Panc1 (cell line): ENCODE measurements at regions of chr3 and their contacts with region 1.

Region 1: DNA sequence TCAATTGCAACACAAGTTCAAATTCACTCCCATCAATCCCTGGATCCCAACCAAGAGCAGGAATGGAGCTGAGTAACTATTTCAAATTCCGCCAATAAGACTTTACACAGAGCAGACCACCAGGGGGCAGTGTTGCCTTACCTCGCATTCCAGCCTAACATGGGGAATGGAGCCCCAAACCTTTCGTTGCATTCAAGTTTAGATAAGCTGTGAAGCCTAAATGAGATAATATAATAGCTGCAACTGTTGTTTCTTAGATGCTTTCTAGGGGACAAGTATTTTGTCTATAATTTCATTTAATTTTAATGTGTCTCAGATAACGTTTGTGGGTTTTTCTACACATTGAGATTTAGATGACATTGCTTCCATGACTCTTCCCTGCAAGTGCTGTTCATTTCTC is 186.7 kb downstream of the NSUN3 start:
- DNase-seq: peak; percentile 39
- ATAC-seq: peak; percentile 75; the same call in 1 of the 2 replicates
- H3K4me3 ChIP-seq: no peak overlapping the region
- H3K27ac ChIP-seq: no peak overlapping the region
- H3K4me1 ChIP-seq: no peaks in the 10 kb centered on the region
- H3K27me3 ChIP-seq: 0 out of 2 replicates have a peak, but pooled peaks cover 6% of the 10 kb centered on the region
- CTCF ChIP-seq: peak; percentile 91

Region 2: GRCh38 chr3:94130690-94131089 is 118.9 kb before region 1 on chr3:
- CTCF ChIA-PET with region 1: no interaction called
- POLR2A ChIA-PET with region 1: no interaction called
- in situ Hi-C with region 1: no loop called
- intact Hi-C with region 1: no loop called
- DNase-seq: no peak
- ATAC-seq: no peak
- H3K4me3 ChIP-seq: no peak overlapping the region
- H3K27ac ChIP-seq: no peak overlapping the region
- H3K4me1 ChIP-seq: no peaks in the 10 kb centered on the region
- H3K27me3 ChIP-seq: no peaks in the 10 kb centered on the region
- CTCF ChIP-seq: no peak

Region 3: DNA sequence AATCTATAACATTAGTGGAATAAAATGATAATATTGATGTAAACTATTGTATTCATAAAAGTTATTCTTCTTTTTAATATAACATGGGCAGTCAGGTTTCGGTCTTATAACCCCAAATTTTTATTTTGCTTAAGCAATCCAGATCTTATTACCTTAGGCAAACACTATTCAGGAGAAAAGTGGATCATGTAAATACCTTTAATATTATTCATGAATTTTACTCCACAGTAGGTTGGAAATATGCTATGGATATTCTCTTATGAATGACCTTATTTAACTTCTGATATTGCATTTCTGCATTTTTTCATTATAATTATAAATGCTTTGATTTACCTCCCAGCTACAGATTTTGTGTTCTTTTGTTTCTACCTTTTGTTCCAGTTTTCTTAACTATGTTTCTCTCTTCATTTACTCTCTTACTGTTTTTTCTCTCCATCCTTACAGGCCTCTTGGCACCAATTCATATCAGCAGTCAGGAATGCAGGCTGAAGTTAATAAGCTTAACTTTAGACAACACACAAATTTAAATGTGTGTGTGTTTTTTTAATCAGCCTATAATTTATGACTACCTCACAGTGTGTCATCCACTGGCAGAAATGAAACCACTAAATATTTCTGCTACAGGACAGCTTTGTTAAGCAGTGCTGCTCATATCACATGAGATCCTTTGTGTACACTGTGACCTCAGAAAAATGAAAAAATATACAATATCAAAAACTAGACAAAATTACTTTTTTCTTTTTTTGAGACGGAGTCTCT is 75.7 kb before region 1 on chr3:
- CTCF ChIA-PET with region 1: no interaction called
- POLR2A ChIA-PET with region 1: no interaction called
- in situ Hi-C with region 1: no loop called
- intact Hi-C with region 1: no loop called
- DNase-seq: no peak
- ATAC-seq: no peak
- H3K4me3 ChIP-seq: no peak overlapping the region
- H3K27ac ChIP-seq: no peak overlapping the region
- H3K4me1 ChIP-seq: no peaks in the 10 kb centered on the region
- H3K27me3 ChIP-seq: no peaks in the 10 kb centered on the region; the same call in 1 of the 2 replicates
- CTCF ChIP-seq: no peak

Region 4: DNA sequence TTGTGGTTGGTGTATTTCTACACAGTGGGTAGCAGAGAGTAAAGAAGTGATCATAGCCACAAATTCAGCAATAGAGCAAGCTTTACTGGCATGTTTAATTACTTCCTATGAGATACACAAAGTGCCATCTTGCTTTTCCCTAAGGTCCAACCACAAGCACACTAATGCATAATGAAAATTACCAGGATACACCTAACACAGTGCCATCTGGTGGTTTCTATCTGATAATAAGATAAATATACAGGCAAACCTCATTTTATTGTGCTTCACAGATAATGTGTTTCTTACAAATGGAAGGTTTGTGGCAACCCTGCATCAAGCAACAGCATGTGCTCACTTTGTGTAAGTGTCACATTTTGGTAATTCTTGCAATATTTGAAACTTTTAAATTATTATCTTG is 36.3 kb after region 1 on chr3:
- CTCF ChIA-PET with region 1: no interaction called
- POLR2A ChIA-PET with region 1: no interaction called
- in situ Hi-C with region 1: no loop called
- intact Hi-C with region 1: loop called (anchors 5 kb)
- DNase-seq: no peak
- ATAC-seq: no peak
- H3K4me3 ChIP-seq: no peak overlapping the region
- H3K27ac ChIP-seq: no peak overlapping the region
- H3K4me1 ChIP-seq: no peaks in the 10 kb centered on the region
- H3K27me3 ChIP-seq: no peaks in the 10 kb centered on the region
- CTCF ChIP-seq: peak; percentile 15; the same call in 1 of the 2 replicates

Region 5: GRCh38 chr3:94336046-94336710 is 86.6 kb after region 1 on chr3:
- CTCF ChIA-PET with region 1: no interaction called
- POLR2A ChIA-PET with region 1: no interaction called
- in situ Hi-C with region 1: no loop called
- intact Hi-C with region 1: loop called (anchors 10 kb)
- DNase-seq: peak; percentile 15
- ATAC-seq: peak; percentile 76; the same call in 1 of the 2 replicates
- H3K4me3 ChIP-seq: no peak overlapping the region
- H3K27ac ChIP-seq: no peak overlapping the region
- H3K4me1 ChIP-seq: no peaks in the 10 kb centered on the region
- H3K27me3 ChIP-seq: no peaks in the 10 kb centered on the region
- CTCF ChIP-seq: peak; percentile 47

Region 6: DNA sequence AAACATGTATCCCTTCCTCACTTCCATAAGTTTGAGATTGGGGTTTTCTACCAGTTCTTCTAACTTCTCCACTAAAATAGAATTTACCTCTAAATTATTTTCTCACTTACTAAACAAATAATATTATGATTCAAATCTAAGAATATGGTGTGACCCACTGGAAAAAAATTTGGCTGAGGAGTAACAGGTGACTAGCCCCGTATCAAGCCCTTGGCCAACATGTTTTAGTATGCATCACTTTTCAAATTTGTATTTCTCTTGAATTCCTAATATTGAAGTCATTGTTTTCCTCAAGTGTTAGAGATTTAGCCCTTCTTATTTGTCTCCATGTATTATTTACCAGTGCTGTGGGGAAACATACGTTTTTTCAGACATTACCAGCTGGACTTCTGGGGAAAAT is 572.7 kb after region 1 on chr3:
- CTCF ChIA-PET with region 1: no interaction called
- POLR2A ChIA-PET with region 1: no interaction called
- in situ Hi-C with region 1: no loop called
- intact Hi-C with region 1: loop called (anchors 10 kb)
- DNase-seq: no peak
- ATAC-seq: no peak
- H3K4me3 ChIP-seq: no peak overlapping the region
- H3K27ac ChIP-seq: no peak overlapping the region
- H3K4me1 ChIP-seq: no peaks in the 10 kb centered on the region
- H3K27me3 ChIP-seq: no peaks in the 10 kb centered on the region
- CTCF ChIP-seq: no peak